ENCODE measurements at regions of chr1 and their contacts with region 1.

Region 1: DNA sequence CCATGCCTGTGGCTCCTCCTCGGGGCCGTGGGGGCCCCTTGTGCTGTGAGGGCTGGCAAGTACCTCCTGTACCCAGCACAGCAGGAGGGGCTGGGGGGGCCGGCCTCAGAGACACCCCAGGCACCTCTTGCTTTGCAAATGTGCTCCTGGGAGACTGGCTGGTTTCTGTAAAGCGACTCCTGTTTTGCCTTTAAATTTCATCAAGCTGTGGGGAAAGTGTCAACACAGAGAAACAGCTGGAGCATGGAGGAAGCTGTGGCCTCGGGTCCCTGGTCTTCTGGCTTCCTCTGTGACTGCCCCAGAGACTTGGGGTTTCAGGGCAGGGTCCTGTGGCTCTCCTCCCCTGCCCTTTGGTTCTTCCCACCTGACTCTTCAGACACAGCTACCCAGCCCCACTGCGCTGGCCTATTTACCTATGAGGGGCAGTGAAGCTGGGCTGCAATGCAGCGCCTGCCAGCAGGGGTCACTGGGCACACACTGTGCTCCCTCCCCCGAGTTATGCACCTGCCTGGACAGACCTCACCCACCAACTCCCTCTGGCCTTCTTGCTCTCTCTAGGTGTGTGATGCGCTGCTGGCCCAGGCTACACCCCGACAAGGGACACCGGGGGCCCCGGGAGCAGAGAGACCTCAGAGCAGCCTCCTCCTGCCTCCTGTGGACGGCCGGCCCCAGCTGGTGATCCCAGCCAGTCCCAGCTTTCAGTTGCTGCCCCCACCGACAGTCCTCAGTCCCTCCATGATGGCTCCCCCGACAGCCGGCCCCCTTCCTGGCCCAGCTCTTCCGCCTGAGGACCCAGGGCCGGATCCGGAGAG is 17.6 kb upstream of the PEX10 start:
- DNase-seq: no peak
- H3K4me3 ChIP-seq: no peak overlapping the region
- H3K27ac ChIP-seq: no peak overlapping the region
- H3K4me1 ChIP-seq: no peaks in the 10 kb centered on the region
- H3K27me3 ChIP-seq: peaks cover 3 to 93% (median 44%) of the 10 kb centered on the region in 3 donors
- CTCF ChIP-seq: no peak
- EP300 ChIP-seq: no peak
- POLR2A ChIP-seq: no peak

Region 2: DNA sequence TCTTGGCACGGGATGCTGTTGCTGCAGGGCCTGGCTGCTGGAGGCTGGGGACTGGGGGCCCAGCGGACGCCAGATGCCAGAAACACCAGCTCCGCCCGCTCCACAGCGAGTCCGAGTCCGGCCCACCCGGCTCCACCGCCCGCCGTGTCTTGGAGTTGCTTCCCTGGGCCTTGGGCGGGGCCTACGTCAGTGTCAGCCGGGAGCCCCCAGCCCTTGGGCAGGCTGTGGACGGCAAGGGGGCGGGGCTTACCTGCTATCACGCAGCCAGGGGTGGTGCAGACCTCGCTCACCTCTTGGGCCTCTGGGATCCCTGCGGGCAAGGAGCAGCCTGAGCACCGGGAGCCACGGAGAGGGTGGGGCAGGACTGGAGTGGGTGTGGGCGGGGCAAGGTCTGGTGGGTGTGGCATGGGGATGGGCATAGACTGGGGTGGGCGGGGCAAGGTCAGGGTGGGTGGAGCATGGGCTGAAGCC is 181.1 kb after region 1 on chr1:
- intact Hi-C with region 1: loop called (anchors 10 kb)
- DNase-seq: peak; percentile 56 to 83
- H3K4me3 ChIP-seq: peak overlapping the region in 3 of 4 donors; percentile 18 to 27 (median 22)
- H3K27ac ChIP-seq: no peak overlapping the region
- H3K4me1 ChIP-seq: peaks cover 0 to 20% (median 10%) of the 10 kb centered on the region in 4 donors
- H3K27me3 ChIP-seq: peaks cover 0 to 46% (median 12%) of the 10 kb centered on the region in 3 donors
- CTCF ChIP-seq: no peak
- EP300 ChIP-seq: no peak
- POLR2A ChIP-seq: no peak